SK-N-SH (cell line): ENCODE measurements at regions of chrX and their contacts with region 1.

Region 1: GRCh38 chrX:34638116-34638515 is 19.0 kb downstream of the TMEM47 start:
- DNase-seq: peak; percentile 7
- H3K4me3 ChIP-seq: no peak overlapping the region
- H3K27ac ChIP-seq: no peak overlapping the region
- H3K4me1 ChIP-seq: no peaks in the 10 kb centered on the region
- H3K27me3 ChIP-seq: no peaks in the 10 kb centered on the region; the same call in 1 of the 2 replicates
- CTCF ChIP-seq: peak; percentile 75
- EP300 ChIP-seq: no peak
- RAD21 ChIP-seq: peak; percentile 61

Region 2: DNA sequence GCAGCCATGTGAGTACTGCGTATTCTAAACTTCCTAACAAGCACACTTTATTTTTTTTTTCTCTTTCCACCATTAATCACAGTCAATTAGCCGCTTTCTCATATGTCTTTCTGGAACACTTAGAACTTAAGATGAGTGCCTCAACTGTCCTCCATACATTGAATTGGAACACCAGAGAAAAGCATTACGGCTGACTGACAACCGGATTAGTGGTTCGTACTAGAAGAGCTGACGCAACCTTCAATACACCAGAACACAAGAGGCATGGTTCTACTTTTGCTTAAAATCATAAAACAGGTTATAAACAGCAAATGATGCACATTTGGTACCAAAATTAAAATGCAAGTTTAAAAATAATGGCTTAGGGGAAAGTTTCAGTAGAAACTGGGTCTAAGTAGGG is 15.7 kb after region 1 on chrX:
- CTCF ChIA-PET with region 1: interaction called, 19 read pairs
- POLR2A ChIA-PET with region 1: no interaction called
- DNase-seq: no peak
- H3K4me3 ChIP-seq: no peak overlapping the region
- H3K27ac ChIP-seq: no peak overlapping the region
- H3K4me1 ChIP-seq: peaks cover 0 to 6% of the 10 kb centered on the region in 2 experiments; a peak in 2 of 4 replicates
- H3K27me3 ChIP-seq: peaks cover 38% of the 10 kb centered on the region
- CTCF ChIP-seq: no peak
- EP300 ChIP-seq: no peak
- RAD21 ChIP-seq: no peak